ENCODE measurements at regions of chr14 and their contacts with region 1.

Region 1: DNA sequence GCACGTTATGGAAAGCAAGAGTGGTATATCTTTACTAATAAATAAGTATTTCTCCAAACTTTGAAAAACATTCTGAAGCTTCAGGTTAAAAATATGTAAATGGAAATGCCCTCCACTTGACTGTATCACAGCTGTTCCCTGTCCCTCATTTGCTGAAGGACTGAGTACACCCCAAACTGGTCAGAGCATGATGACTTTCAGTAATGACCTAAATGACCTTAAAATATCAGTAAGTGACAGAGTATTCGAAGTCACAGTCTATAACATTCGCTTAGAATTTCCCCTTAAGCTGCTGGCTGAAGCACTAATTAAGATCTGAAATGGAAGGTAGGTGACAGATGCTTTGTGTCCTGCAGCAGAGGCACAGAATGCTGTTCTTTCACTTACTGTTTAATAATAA is 191.5 kb downstream of the RGS6 start:
- DNase-seq: no peak
- H3K4me3 ChIP-seq: no peak overlapping the region
- H3K27ac ChIP-seq: no peak overlapping the region
- H3K4me1 ChIP-seq: no peaks in the 10 kb centered on the region
- CTCF ChIP-seq: no peak

Region 2: DNA sequence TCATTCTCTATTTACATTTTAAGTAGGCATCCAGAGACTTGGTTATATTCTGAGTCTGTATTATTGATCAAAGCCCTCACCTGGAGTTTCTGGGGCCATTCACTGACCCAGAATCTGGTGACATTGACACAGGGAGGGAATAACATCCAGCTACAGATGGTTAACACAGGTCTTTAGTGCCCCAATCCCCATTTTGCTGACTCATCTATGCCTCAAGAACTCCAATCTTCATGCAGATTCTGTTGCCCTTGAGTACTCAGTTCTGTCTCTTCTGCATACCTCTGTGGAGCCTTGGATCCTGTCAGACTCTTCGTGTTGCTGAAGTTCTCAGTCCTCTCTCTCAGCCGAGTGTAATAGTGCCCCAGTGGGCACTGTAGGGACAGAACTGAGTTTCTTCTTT is 17.3 kb after region 1 on chr14:
- CTCF ChIA-PET with region 1: no interaction called
- POLR2A ChIA-PET with region 1: interaction called, 10 read pairs
- intact Hi-C with region 1: no loop called
- DNase-seq: no peak
- H3K4me3 ChIP-seq: no peak overlapping the region
- H3K27ac ChIP-seq: no peak overlapping the region
- H3K4me1 ChIP-seq: no peaks in the 10 kb centered on the region
- CTCF ChIP-seq: no peak